ENCODE measurements at regions of chr7 and their contacts with region 1.

Region 1: GRCh38 chr7:20172736-20173334 is 44.3 kb downstream of the MACC1 start:
- DNase-seq: peak; percentile 66
- H3K4me3 ChIP-seq: no peak overlapping the region
- H3K27ac ChIP-seq: no peak overlapping the region
- H3K4me1 ChIP-seq: no peaks in the 10 kb centered on the region
- H3K27me3 ChIP-seq: no peaks in the 10 kb centered on the region
- CTCF ChIP-seq: peak; percentile 67
- EP300 ChIP-seq: no peak
- RAD21 ChIP-seq: peak; percentile 78

Region 2: DNA sequence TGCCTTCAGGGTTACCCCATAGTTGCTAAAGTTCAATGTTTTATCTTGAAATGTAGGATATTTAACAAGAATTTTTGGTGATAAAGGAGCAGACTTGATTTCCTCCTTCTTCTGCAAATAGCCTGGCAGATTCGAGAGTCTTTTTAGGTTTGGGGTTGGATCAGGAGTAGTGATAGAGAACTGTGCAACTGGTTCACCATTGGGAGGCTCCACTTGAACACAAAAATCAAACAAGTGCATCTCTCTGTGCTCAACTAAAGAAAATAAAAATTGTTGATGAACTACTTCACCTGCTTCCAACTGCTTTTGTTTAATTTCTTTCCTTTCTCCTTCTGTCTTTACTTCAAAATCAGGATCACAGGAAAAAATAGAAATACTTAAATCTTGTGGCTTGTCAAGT is 14.2 kb before region 1 on chr7:
- CTCF ChIA-PET with region 1: interaction called, 23 read pairs
- POLR2A ChIA-PET with region 1: no interaction called
- DNase-seq: no peak
- H3K4me3 ChIP-seq: no peak overlapping the region
- H3K27ac ChIP-seq: no peak overlapping the region
- H3K4me1 ChIP-seq: no peaks in the 10 kb centered on the region
- H3K27me3 ChIP-seq: no peaks in the 10 kb centered on the region
- CTCF ChIP-seq: peak; percentile 60
- EP300 ChIP-seq: no peak
- RAD21 ChIP-seq: peak; percentile 71

Region 3: DNA sequence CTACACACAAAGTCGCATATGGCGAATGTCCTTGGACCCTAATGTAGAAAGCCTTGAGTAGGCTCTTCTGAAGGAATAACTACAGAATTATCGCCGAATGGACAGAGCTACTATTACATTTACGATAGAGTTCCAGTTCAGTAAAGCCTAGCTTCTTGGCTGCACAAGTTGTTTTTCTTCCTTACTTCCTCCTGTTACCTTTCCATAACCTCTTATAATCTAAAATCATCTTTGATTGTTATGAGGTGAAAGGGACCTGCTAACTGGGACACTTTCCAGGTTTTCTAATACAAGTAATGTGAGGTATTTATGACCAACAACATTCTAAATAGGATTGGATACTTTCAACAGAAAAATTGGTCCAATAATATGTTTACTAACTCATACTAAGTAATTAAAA is 13.2 kb after region 1 on chr7:
- CTCF ChIA-PET with region 1: interaction called, 13 read pairs
- POLR2A ChIA-PET with region 1: no interaction called
- DNase-seq: no peak
- H3K4me3 ChIP-seq: no peak overlapping the region
- H3K27ac ChIP-seq: no peak overlapping the region
- H3K4me1 ChIP-seq: no peaks in the 10 kb centered on the region
- H3K27me3 ChIP-seq: no peaks in the 10 kb centered on the region
- CTCF ChIP-seq: no peak
- EP300 ChIP-seq: no peak
- RAD21 ChIP-seq: no peak

Region 4: GRCh38 chr7:20241194-20241910 is 68.5 kb after region 1 on chr7:
- CTCF ChIA-PET with region 1: no interaction called
- POLR2A ChIA-PET with region 1: no interaction called
- DNase-seq: no peak
- H3K4me3 ChIP-seq: no peak overlapping the region
- H3K27ac ChIP-seq: peak overlapping the region in 1 of 2 experiments; percentile 52; a peak in 2 of 4 replicates
- H3K4me1 ChIP-seq: peaks cover 0 to 21% of the 10 kb centered on the region in 2 experiments; a peak in 2 of 4 replicates
- H3K27me3 ChIP-seq: no peaks in the 10 kb centered on the region
- CTCF ChIP-seq: no peak
- EP300 ChIP-seq: peak; percentile 10 to 76; a peak in 3 of 4 replicates
- RAD21 ChIP-seq: no peak